ENCODE measurements at regions of chr1 and their contacts with region 1.

Region 1: DNA sequence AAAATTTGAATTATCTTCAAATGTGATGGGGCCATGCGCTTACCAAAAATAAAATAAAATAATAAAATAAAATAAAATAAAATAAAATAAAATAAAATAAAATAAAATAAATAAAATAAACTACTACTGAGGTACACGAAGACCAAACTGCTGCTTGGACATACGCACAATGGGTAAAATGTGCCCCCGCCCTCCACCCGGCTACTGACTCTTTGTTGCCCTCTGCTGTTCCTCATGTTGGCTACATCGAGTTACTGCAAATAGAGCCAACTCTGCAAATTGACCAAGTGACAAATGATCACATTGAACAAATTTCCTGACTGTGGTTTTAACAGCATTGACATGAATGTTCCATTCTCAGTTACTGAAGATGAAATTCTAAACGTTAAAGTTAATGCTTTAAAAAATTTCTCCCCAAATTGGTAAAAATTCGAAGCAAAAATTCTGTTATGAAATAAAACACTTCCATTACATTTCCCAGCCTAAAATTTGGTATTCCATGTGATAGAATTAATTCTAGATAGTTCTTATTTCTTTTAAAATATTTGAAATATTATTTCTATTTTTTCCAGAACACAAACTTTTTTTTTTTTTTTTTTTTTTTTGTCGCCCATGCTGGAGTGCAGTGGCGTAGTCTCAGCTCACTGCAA is 18.8 kb upstream of the MAP1LC3C start:
- DNase-seq: peak; percentile 58
- H3K4me3 ChIP-seq: no peak overlapping the region
- H3K27ac ChIP-seq: no peak overlapping the region
- H3K4me1 ChIP-seq: no peaks in the 10 kb centered on the region
- H3K27me3 ChIP-seq: no peaks in the 10 kb centered on the region
- CTCF ChIP-seq: peak; percentile 58

Region 2: GRCh38 chr1:241611063-241611462 is 406.6 kb before region 1 on chr1:
- CTCF ChIA-PET with region 1: no interaction called
- POLR2A ChIA-PET with region 1: no interaction called
- intact Hi-C with region 1: loop called (anchors 10 kb)
- DNase-seq: peak; percentile 69
- H3K4me3 ChIP-seq: no peak overlapping the region
- H3K27ac ChIP-seq: no peak overlapping the region
- H3K4me1 ChIP-seq: no peaks in the 10 kb centered on the region
- H3K27me3 ChIP-seq: no peaks in the 10 kb centered on the region
- CTCF ChIP-seq: peak; percentile 56

Region 3: GRCh38 chr1:241627453-241628259 is 390.1 kb before region 1 on chr1:
- CTCF ChIA-PET with region 1: interaction called, 17 read pairs
- POLR2A ChIA-PET with region 1: no interaction called
- intact Hi-C with region 1: no loop called
- DNase-seq: peak; percentile 52
- H3K4me3 ChIP-seq: no peak overlapping the region
- H3K27ac ChIP-seq: no peak overlapping the region
- H3K4me1 ChIP-seq: peaks cover 18% of the 10 kb centered on the region
- H3K27me3 ChIP-seq: no peaks in the 10 kb centered on the region
- CTCF ChIP-seq: peak; percentile 50

Region 4: GRCh38 chr1:241895013-241895412 is 122.7 kb before region 1 on chr1:
- CTCF ChIA-PET with region 1: no interaction called
- POLR2A ChIA-PET with region 1: no interaction called
- intact Hi-C with region 1: loop called (anchors 1 kb)
- DNase-seq: no peak
- H3K4me3 ChIP-seq: no peak overlapping the region
- H3K27ac ChIP-seq: no peak overlapping the region
- H3K4me1 ChIP-seq: no peaks in the 10 kb centered on the region
- H3K27me3 ChIP-seq: no peaks in the 10 kb centered on the region
- CTCF ChIP-seq: no peak

Region 5: GRCh38 chr1:242454262-242455045 is 436.7 kb after region 1 on chr1:
- CTCF ChIA-PET with region 1: no interaction called
- POLR2A ChIA-PET with region 1: no interaction called
- intact Hi-C with region 1: loop called (anchors 10 kb)
- DNase-seq: peak; percentile 72
- H3K4me3 ChIP-seq: no peak overlapping the region
- H3K27ac ChIP-seq: no peak overlapping the region
- H3K4me1 ChIP-seq: peaks cover 6% of the 10 kb centered on the region
- H3K27me3 ChIP-seq: no peaks in the 10 kb centered on the region
- CTCF ChIP-seq: peak; percentile 65

Region 6: DNA sequence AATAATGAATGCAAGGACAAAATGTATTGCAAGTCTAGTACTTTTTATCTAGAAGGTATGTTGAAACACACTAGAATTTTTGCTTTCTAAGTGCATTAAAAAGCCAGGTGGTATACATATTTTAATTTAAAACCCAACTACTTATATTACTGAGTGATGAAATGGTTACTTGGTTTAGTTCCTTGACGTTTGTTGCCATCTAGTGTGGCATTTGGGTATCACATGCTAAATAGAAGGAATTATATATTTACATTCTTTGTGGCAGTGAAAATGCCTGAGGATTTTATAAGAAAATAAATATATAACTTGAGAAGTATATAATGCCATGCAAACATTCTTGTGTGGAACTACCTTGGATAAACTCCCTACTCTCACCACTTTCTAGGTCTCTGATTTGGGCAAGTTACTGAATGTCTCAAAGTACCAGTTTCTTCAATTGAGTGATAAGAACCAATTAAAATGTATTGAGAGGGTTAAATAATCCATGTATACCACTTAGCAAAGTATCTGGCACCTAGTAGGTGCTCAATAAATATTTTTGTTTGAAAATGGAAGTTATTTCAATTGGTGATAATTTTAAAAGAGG is 1307.7 kb after region 1 on chr1:
- CTCF ChIA-PET with region 1: no interaction called
- POLR2A ChIA-PET with region 1: no interaction called
- intact Hi-C with region 1: loop called (anchors 10 kb)
- DNase-seq: peak; percentile 49
- H3K4me3 ChIP-seq: no peak overlapping the region
- H3K27ac ChIP-seq: no peak overlapping the region
- H3K4me1 ChIP-seq: no peaks in the 10 kb centered on the region
- H3K27me3 ChIP-seq: no peaks in the 10 kb centered on the region
- CTCF ChIP-seq: peak; percentile 62

Measured in A673 (cell line).